Sciatic nerve (tissue), 2 donors: ENCODE measurements at regions of chr9 and their contacts with region 1.

Region 1: DNA sequence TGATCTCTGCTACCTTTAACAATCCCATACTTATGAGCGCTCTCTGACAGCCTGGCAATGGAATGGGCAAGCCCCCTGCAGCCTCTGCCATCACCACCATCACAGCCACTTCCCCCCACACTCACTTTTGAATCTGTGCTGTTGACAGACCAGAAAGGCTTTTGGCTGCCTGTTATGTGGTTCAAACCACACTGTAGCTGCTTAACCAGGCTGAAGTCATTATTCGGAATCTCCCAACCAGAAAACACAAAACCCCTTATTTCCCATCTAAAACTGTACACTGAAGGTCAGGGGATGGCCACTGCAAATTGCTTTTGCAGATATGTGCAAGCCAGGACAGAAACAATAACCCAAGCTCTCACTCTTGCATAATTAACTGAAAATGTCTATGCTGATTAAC is 35.8 kb downstream of the PTCH1 start:
- DNase-seq: no peak
- ATAC-seq: no peak

Region 2: GRCh38 chr9:94654165-94654894 is 826.7 kb before region 1 on chr9:
- intact Hi-C with region 1: loop called (anchors 5 kb)
- DNase-seq: no peak
- ATAC-seq: no peak

Region 3: GRCh38 chr9:95092262-95093072 is 388.5 kb before region 1 on chr9:
- intact Hi-C with region 1: no loop called
- DNase-seq: peak; percentile 77
- ATAC-seq: peak; percentile 51

Region 4: GRCh38 chr9:95425910-95426551 is 55.0 kb before region 1 on chr9:
- intact Hi-C with region 1: no loop called
- DNase-seq: no peak
- ATAC-seq: peak; percentile 53